ENCODE measurements at regions of chr2 and their contacts with region 1.

Region 1: GRCh38 chr2:31319406-31320175 is 85.6 kb downstream of the EHD3 start:
- H3K4me3 Mint-ChIP-seq: no peak overlapping the region
- H3K27ac Mint-ChIP-seq: peak overlapping the region; percentile 84
- H3K4me1 Mint-ChIP-seq: peaks cover 52% of the 10 kb centered on the region
- H3K27me3 Mint-ChIP-seq: no peaks in the 10 kb centered on the region

Region 2: GRCh38 chr2:30798536-30798991 is 521.0 kb before region 1 on chr2:
- intact Hi-C with region 1: loop called (anchors 10 kb)
- H3K4me3 Mint-ChIP-seq: no peak overlapping the region
- H3K27ac Mint-ChIP-seq: no peak overlapping the region
- H3K4me1 Mint-ChIP-seq: peaks cover 18% of the 10 kb centered on the region
- H3K27me3 Mint-ChIP-seq: peaks cover 70% of the 10 kb centered on the region

Region 3: DNA sequence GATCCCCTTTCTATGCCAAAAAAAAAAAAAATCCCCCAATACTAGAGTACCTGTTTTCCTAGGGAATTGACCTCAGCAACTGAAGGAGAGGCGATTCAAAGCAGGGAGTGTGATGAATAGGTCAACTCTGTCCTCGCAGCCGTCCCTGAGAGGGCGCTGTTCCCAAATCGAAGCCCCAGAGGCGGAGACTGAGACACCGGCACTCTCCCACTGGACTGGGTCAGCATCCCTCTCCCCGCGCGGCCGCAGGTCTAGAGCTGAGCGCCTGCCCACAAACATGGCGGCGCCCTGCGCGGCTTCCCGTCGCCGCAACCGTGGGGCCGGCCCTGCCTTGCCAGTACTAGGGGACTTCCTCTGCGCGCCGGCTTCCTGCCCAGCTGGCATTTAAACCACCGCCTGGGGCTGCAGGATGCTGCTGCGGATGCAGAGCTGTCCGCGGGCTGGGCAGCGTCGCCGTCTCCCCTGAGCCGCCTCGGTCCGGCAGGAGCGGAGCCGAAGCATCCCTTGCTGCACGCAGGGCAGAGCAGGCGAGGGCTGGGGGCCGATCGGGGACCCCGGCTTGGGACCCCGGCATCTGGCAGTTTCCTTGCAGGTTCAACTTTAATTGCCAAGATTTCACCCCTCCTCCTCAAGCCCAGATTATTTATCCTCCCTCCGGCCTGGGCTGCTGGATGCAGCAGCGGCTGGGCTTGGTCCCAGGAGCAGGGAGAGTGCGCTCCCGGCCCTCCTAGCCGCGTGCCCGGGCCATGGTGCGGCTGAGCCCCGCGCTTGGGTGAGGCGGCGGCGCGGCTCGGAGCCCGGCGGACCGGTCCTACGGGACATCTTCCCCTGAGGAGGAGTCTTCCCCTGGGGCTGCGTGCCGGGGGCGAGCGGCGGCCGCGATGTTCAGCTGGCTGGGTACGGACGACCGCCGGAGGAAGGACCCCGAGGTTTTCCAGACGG is 85.6 kb before region 1 on chr2 and contains the start of gene EHD3:
- intact Hi-C with region 1: loop called (anchors 10 kb)
- H3K4me3 Mint-ChIP-seq: peak within 1 kb of the TSS; percentile 78
- H3K27ac Mint-ChIP-seq: no peak within 1 kb of the TSS
- H3K4me1 Mint-ChIP-seq: peaks cover 18% of the 10 kb centered on the region
- H3K27me3 Mint-ChIP-seq: peaks cover 13% of the 10 kb centered on the region

Region 4: DNA sequence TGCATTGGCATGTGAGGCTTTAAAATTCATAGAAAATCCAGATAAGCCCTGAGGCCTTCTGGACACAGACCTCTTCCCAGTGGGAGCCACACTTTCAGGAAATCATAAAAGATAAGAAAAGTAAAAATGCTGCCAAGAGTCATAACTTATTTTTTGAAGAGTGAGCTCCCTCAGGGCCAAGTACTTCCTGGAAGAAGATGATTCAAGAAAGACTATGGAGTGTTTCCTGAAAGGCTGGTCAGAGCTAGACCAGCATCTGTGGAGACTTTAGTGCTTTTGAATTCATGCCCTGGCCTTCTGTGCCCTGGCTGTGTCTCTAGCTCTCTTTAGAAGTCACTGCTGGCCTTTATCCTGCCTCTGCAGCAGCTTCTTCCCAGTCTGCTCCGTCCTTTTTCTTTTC is 101.3 kb after region 1 on chr2:
- intact Hi-C with region 1: no loop called
- H3K4me3 Mint-ChIP-seq: no peak overlapping the region
- H3K27ac Mint-ChIP-seq: no peak overlapping the region
- H3K4me1 Mint-ChIP-seq: peaks cover 7% of the 10 kb centered on the region
- H3K27me3 Mint-ChIP-seq: no peaks in the 10 kb centered on the region

Measured in dendritic cell treated with granulocyte-macrophage colony-stimulating factor and Interleukin-4, amounts not matched to agents 40 ng/mL and 50 ng/mL, for 4 days (primary cell).